ENCODE measurements at regions of chr7 and their contacts with region 1.

Region 1: DNA sequence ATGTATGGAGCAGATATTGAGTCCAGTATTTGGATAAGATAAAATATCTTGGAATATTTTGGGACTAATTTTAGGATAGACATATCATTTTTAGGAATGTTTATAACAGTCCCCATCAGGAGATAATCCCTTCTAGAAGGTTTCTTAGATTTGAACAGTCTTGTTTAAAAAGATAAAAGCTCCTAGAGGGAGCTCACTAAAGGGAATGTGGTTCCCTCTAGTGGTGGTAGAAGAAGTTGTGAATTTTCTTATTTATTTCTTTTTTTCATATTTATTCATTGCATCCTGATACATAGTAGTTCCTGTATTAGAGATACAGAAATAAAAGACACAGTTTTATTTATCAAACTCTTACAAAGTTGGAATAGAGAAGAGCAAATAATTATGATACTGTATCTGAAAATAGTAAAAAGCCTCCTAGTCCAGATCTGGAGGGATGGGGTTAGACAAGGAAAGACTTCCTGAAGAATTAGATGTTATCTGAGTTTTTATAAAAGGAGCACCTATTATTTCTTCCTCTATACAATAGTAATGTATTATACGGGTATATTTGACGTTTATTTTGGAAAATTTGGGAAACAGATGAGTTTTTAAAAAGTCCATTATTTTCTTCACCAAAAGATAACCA is 24.5 kb upstream of the KLF14 start:
- DNase-seq: peak; percentile 30
- H3K4me3 ChIP-seq: no peak overlapping the region
- H3K27ac ChIP-seq: no peak overlapping the region
- H3K27me3 ChIP-seq: peaks cover 23% of the 10 kb centered on the region
- CTCF ChIP-seq: peak; percentile 69

Region 2: GRCh38 chr7:130037703-130038102 is 720.8 kb before region 1 on chr7:
- CTCF ChIA-PET with region 1: interaction called, 10 read pairs
- POLR2A ChIA-PET with region 1: no interaction called
- DNase-seq: no peak
- H3K4me3 ChIP-seq: no peak overlapping the region
- H3K27ac ChIP-seq: no peak overlapping the region
- H3K27me3 ChIP-seq: no peaks in the 10 kb centered on the region
- CTCF ChIP-seq: peak; percentile 57

Region 3: GRCh38 chr7:130063036-130063435 is 695.5 kb before region 1 on chr7:
- CTCF ChIA-PET with region 1: interaction called, 12 read pairs
- POLR2A ChIA-PET with region 1: no interaction called
- DNase-seq: no peak
- H3K4me3 ChIP-seq: no peak overlapping the region
- H3K27ac ChIP-seq: no peak overlapping the region
- H3K27me3 ChIP-seq: no peaks in the 10 kb centered on the region
- CTCF ChIP-seq: peak; percentile 76

Region 4: GRCh38 chr7:130831817-130832481 is 73.4 kb after region 1 on chr7:
- CTCF ChIA-PET with region 1: interaction called, 29 read pairs
- POLR2A ChIA-PET with region 1: no interaction called
- DNase-seq: no peak
- H3K4me3 ChIP-seq: no peak overlapping the region
- H3K27ac ChIP-seq: no peak overlapping the region
- H3K27me3 ChIP-seq: no peaks in the 10 kb centered on the region
- CTCF ChIP-seq: peak; percentile 75

Region 5: GRCh38 chr7:131010029-131010716 is 251.6 kb after region 1 on chr7:
- CTCF ChIA-PET with region 1: no interaction called
- POLR2A ChIA-PET with region 1: no interaction called
- DNase-seq: no peak
- H3K4me3 ChIP-seq: no peak overlapping the region
- H3K27ac ChIP-seq: no peak overlapping the region
- H3K27me3 ChIP-seq: no peaks in the 10 kb centered on the region
- CTCF ChIP-seq: no peak